ENCODE measurements at regions of chr2 and their contacts with region 1.

Region 1: DNA sequence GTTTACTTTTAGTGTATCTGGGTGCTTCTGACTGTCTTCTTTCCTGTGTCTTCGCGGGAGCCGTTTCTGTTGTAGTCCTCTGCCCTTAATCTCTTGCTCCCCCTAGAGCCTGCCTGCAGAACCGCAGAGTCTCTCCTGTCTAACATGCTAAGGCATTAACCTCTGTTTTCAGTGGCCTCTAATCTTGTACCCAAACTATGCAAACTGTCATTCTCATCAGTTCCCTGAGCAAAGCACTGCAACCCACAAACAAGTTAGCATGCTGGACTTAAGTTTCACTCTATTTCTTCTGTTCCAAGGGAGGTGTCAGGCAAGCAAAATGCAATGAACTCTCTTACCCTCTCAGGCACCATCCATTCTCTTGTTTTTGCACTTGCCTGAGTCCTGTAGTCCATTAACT is 138.4 kb downstream of the OTX1 start:
- DNase-seq: peak; percentile 75
- H3K4me3 ChIP-seq: no peak overlapping the region
- H3K27ac ChIP-seq: no peak overlapping the region
- H3K4me1 ChIP-seq: no peaks in the 10 kb centered on the region
- H3K27me3 ChIP-seq: no peaks in the 10 kb centered on the region
- CTCF ChIP-seq: peak; percentile 94

Region 2: GRCh38 chr2:62939735-62940491 is 249.1 kb before region 1 on chr2:
- CTCF ChIA-PET with region 1: no interaction called
- POLR2A ChIA-PET with region 1: no interaction called
- intact Hi-C with region 1: loop called (anchors 5 kb)
- DNase-seq: no peak
- H3K4me3 ChIP-seq: no peak overlapping the region
- H3K27ac ChIP-seq: no peak overlapping the region
- H3K4me1 ChIP-seq: no peaks in the 10 kb centered on the region
- H3K27me3 ChIP-seq: no peaks in the 10 kb centered on the region
- CTCF ChIP-seq: no peak

Measured in A673 (cell line).